Activated CD8-positive, alpha-beta T cell treated with anti-CD3 and anti-CD28 coated beads for 36 hours (primary cell): ENCODE measurements at regions of chr7 and their contacts with region 1.

Region 1: GRCh38 chr7:5494683-5495561 is 71.3 kb upstream of the TNRC18 start:
- DNase-seq: peak; percentile 84
- ATAC-seq: peak; percentile 87
- H3K4me3 Mint-ChIP-seq: no peak overlapping the region
- H3K27ac Mint-ChIP-seq: no peak overlapping the region
- H3K4me1 Mint-ChIP-seq: peaks cover 26% of the 10 kb centered on the region
- H3K27me3 Mint-ChIP-seq: no peaks in the 10 kb centered on the region
- CTCF ChIP-seq: peak; percentile 95

Region 2: GRCh38 chr7:5428478-5429252 is 66.3 kb before region 1 on chr7:
- CTCF ChIA-PET with region 1: no interaction called
- POLR2A ChIA-PET with region 1: no interaction called
- intact Hi-C with region 1: no loop called
- DNase-seq: peak; percentile 40
- ATAC-seq: no peak
- H3K4me3 Mint-ChIP-seq: no peak overlapping the region
- H3K27ac Mint-ChIP-seq: no peak overlapping the region
- H3K4me1 Mint-ChIP-seq: peaks cover 26% of the 10 kb centered on the region
- H3K27me3 Mint-ChIP-seq: peaks cover 71% of the 10 kb centered on the region
- CTCF ChIP-seq: no peak

Region 3: GRCh38 chr7:5472432-5473315 is 22.2 kb before region 1 on chr7:
- CTCF ChIA-PET with region 1: no interaction called
- POLR2A ChIA-PET with region 1: no interaction called
- intact Hi-C with region 1: no loop called
- DNase-seq: peak; percentile 38
- ATAC-seq: peak; percentile 30
- H3K4me3 Mint-ChIP-seq: no peak overlapping the region
- H3K27ac Mint-ChIP-seq: no peak overlapping the region
- H3K4me1 Mint-ChIP-seq: peaks cover 2% of the 10 kb centered on the region
- H3K27me3 Mint-ChIP-seq: no peaks in the 10 kb centered on the region
- CTCF ChIP-seq: no peak

Region 4: GRCh38 chr7:5510426-5511045 is 15.6 kb after region 1 on chr7:
- CTCF ChIA-PET with region 1: interaction called, 18 read pairs
- POLR2A ChIA-PET with region 1: interaction called, 3 read pairs
- intact Hi-C with region 1: no loop called
- DNase-seq: no peak
- ATAC-seq: no peak
- H3K4me3 Mint-ChIP-seq: no peak overlapping the region
- H3K27ac Mint-ChIP-seq: no peak overlapping the region
- H3K4me1 Mint-ChIP-seq: peaks cover 19% of the 10 kb centered on the region
- H3K27me3 Mint-ChIP-seq: no peaks in the 10 kb centered on the region
- CTCF ChIP-seq: no peak

Region 5: GRCh38 chr7:5539013-5539411 is 44.1 kb after region 1 on chr7:
- CTCF ChIA-PET with region 1: interaction called, 10 read pairs
- POLR2A ChIA-PET with region 1: no interaction called
- intact Hi-C with region 1: no loop called
- DNase-seq: no peak
- ATAC-seq: no peak
- H3K4me3 Mint-ChIP-seq: peak overlapping the region; percentile 35
- H3K27ac Mint-ChIP-seq: peak overlapping the region; percentile 60
- H3K4me1 Mint-ChIP-seq: peaks cover 13% of the 10 kb centered on the region
- H3K27me3 Mint-ChIP-seq: no peaks in the 10 kb centered on the region
- CTCF ChIP-seq: no peak

Region 6: GRCh38 chr7:5665094-5666025 is 170.4 kb after region 1 on chr7:
- CTCF ChIA-PET with region 1: interaction called, 60 read pairs
- POLR2A ChIA-PET with region 1: no interaction called
- intact Hi-C with region 1: loop called (anchors 10 kb)
- DNase-seq: peak; percentile 77
- ATAC-seq: peak; percentile 80
- H3K4me3 Mint-ChIP-seq: no peak overlapping the region
- H3K27ac Mint-ChIP-seq: peak overlapping the region; percentile 20
- H3K4me1 Mint-ChIP-seq: peaks cover 31% of the 10 kb centered on the region
- H3K27me3 Mint-ChIP-seq: no peaks in the 10 kb centered on the region
- CTCF ChIP-seq: peak; percentile 81

Region 7: DNA sequence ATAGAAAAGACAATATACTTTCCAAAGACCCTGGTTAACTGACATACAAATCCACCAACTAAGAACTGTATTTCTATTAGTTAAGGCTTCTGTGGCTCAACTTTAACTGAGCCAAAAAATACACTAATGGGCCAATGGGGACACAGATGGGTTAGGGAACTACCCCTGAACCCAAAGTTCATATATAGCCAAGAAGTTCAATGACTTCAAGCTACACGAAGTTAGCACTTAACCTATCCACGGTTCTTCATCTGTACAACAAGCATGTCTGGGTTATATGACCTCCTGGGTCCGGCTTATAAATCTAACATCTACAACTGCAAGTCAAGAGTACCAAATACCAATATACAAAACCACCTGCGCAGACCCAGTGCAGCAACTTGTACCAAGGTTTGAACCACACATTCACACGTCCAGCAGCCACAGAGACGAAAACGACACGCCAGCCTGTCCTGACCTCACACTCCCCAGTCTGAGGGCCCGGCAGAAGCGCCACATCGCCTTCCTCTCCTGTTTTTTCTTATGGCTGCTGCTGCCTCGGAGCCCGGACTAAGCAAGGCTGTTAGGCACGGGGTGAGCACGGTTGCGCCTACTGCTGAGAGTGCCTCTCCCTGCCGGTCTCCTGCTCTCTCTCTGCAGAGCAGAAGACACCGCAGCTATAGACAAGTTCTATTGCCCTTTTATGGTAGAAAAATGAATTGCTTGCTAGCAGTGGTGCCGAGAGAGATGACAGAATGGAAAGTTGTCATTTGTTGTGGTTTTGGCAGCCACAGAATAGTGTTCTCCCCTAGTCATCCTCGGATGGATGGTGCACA is 200.2 kb after region 1 on chr7:
- CTCF ChIA-PET with region 1: interaction called, 19 read pairs
- POLR2A ChIA-PET with region 1: no interaction called
- intact Hi-C with region 1: no loop called
- DNase-seq: peak; percentile 87
- ATAC-seq: peak; percentile 75
- H3K4me3 Mint-ChIP-seq: peak overlapping the region; percentile 86
- H3K27ac Mint-ChIP-seq: peak overlapping the region; percentile 95
- H3K4me1 Mint-ChIP-seq: peaks cover 98% of the 10 kb centered on the region
- H3K27me3 Mint-ChIP-seq: no peaks in the 10 kb centered on the region
- CTCF ChIP-seq: no peak